Tibial artery (tissue), 4 donors: ENCODE measurements at regions of chr9 and their contacts with region 1.

Region 1: DNA sequence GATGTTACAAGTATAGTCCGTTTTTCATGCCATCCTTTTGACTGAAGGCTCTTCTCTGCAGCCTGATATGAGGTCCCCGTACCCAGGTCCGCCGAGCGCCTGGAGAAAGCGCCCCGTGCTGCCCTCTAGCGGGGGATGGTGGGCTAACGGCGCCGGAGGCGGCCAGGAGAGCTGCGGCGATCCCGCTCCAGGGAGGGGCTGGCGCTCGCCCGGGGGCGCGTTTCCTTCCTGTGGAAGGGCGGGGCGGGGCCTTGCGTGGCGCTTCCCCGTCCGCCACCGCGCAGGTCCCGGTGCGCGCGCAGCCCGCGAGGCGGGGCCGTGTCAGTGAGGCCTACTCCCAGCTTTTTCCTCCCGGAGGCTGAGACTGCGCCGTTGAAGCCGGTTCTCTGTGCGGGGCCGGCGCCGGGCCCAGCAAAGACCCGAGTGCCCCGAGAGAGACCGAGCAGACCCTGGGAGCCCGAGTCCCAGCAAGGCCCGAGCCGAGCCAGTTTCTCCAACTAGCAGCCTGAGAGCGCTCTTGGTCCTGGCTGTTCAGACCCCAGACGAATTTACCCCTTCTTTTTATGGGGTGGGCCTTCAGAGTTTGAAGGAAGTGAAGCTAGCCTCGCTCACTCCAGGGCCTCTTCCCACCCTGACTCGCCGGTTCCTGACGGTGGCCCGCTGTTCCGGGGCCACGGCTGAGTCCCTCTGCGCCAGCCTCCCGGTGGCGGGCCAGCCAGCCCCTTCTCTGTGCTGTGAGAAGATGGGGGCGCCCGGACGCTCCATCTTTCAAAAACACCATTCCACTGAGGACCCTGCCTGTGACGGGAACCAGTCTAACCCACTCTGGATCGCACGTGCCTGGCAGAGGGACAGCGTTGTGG is 9.7 kb upstream of the PHF2 start:
- DNase-seq: peak; percentile 97 to 99
- H3K4me3 ChIP-seq: peak overlapping the region; percentile 58 to 60
- H3K27ac ChIP-seq: peak overlapping the region; percentile 88 to 97
- H3K4me1 ChIP-seq: peaks cover 0 to 10% (median 9%) of the 10 kb centered on the region in 4 donors
- H3K27me3 ChIP-seq: no peaks in the 10 kb centered on the region
- CTCF ChIP-seq: peak; percentile 92 to 95

Region 2: DNA sequence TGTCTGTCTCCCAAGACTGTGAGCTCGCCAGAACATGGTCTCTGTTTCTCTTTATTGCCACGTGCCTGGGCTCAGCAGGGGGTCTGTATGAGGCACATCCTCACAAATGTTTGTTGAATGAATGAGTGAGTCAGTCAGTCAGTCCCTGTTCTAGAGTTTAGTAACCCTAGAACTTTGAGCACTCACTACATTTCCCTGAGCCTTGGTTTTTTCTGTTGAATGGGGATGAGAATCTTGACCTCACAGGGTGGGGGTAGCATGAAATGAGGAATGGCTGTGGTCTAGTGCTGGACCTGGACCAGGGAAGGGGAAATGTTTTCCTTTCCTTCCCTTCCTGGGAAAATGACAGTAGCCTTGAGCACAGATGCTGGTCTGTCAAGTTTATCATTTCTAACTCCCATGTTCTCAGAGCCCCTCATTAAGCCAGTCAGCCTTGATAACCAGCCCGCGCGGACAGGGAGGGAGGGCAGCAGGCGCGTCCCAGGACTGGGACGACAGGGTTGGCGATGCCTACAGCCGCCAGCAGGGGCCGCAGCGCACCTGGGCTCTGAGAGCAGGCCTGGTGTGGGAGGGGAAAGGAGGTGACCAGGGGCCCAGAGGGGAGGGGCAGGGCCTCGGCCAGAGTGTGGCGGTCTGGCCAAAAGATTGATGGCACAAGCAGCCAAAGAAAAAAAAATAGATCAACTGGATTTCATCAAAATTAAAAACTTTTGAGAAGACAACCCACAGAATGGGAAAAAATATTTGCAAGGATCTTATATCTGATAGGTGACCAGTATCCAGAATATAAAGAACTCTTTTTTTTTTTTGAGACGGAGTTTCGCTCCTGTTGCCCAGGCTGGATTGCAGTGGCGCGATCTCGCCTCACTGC is 406.8 kb before region 1 on chr9:
- intact Hi-C with region 1: loop called (anchors 10 kb)
- DNase-seq: peak; percentile 76 to 89
- H3K4me3 ChIP-seq: no peak overlapping the region
- H3K27ac ChIP-seq: no peak overlapping the region
- H3K4me1 ChIP-seq: peaks cover 0 to 8% (median 3%) of the 10 kb centered on the region in 4 donors
- H3K27me3 ChIP-seq: no peaks in the 10 kb centered on the region
- CTCF ChIP-seq: peak; percentile 95 to 98

Region 3: DNA sequence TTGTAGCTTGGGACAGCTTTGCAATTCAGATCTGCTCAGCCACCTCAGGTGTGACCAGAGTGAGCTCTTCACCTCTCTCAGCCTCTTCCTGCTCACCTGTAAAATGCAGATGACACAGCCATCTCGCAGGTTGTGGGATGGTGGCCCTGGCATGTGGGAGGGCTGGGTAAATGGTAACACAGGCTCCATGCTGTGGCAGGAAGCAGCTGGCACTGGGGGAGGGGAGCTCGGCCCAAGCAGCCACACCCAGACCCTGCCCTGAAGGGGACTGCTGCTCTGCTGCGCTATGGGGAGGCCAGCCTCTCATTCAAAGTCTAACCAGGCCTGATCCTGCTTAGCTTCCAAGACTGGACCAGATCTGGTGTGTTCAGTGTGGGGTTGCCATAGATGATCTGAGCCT is 33.9 kb after region 1 on chr9:
- intact Hi-C with region 1: no loop called
- DNase-seq: peak in 1 of 2 donors; percentile 45
- H3K4me3 ChIP-seq: no peak overlapping the region
- H3K27ac ChIP-seq: no peak overlapping the region
- H3K4me1 ChIP-seq: peaks cover 0 to 32% (median 15%) of the 10 kb centered on the region in 4 donors
- H3K27me3 ChIP-seq: no peaks in the 10 kb centered on the region
- CTCF ChIP-seq: no peak

Region 4: GRCh38 chr9:93827545-93828330 is 261.1 kb after region 1 on chr9:
- intact Hi-C with region 1: no loop called
- DNase-seq: no peak
- H3K4me3 ChIP-seq: peak overlapping the region; percentile 38 to 50
- H3K27ac ChIP-seq: no peak overlapping the region
- H3K4me1 ChIP-seq: peaks cover 0 to 32% (median 5%) of the 10 kb centered on the region in 4 donors
- H3K27me3 ChIP-seq: peaks cover 0 to 14% of the 10 kb centered on the region in 2 donors
- CTCF ChIP-seq: peak; percentile 60 to 93